Activated T-helper 2 cell treated with anti-CD3 and anti-CD28 coated beads, Interferon-gamma antibody, Interleukin-2, Interleukin-4, amounts not matched to agents 10 μg/mL and 5 μg/mL and 100 μg/mL, durations not matched to agents 14 hours and 24 hours and 36 hours (primary cell): ENCODE measurements at regions of chr2 and their contacts with region 1.

Region 1: DNA sequence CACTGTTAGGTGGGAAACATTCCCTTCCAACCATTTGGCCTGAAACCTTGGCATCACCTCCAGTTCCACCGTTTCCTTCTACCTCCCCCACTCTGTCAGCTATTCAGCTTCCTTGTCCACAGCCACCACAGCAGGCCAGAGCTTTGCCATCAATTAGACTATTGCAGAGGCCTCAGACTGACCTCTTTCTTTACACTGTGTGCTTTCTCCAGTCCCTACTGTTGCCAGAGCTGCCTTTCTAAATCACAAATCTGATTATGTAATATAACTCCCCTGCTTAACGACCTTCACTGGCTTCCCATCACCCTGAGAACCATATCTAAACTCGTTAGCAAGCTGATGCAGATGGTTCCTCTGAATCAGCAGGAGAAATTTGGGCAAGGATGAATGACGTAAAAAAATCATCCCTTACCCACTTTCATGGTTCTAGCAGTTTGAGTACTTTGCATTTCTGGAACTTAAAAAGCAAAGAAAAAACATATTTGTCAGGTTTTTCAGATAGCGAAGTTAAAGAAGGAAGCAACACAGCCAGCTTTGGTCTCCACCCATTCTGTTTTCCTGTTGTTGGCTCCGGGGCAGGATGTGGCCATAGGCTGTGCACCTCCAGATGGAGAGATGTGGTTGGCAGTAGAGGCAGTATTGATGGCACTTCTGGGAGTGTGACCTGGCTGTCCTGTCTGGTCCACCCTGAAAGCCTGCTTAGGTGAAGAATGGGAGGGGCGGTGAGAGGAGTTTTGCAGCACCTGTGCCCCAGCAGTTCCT is 422.1 kb downstream of the PARD3B start:
- DNase-seq: peak; percentile 72
- H3K4me3 Mint-ChIP-seq: peak overlapping the region; percentile 6
- H3K27ac Mint-ChIP-seq: peak overlapping the region; percentile 81
- H3K4me1 Mint-ChIP-seq: peaks cover 52% of the 10 kb centered on the region
- H3K27me3 Mint-ChIP-seq: no peaks in the 10 kb centered on the region

Region 2: GRCh38 chr2:204892506-204893255 is 74.7 kb before region 1 on chr2:
- intact Hi-C with region 1: loop called (anchors 2 kb)
- DNase-seq: peak; percentile 17
- H3K4me3 Mint-ChIP-seq: no peak overlapping the region
- H3K27ac Mint-ChIP-seq: no peak overlapping the region
- H3K4me1 Mint-ChIP-seq: peaks cover 14% of the 10 kb centered on the region
- H3K27me3 Mint-ChIP-seq: no peaks in the 10 kb centered on the region

Region 3: GRCh38 chr2:204913854-204914464 is 53.4 kb before region 1 on chr2:
- intact Hi-C with region 1: no loop called
- DNase-seq: no peak
- H3K4me3 Mint-ChIP-seq: no peak overlapping the region
- H3K27ac Mint-ChIP-seq: no peak overlapping the region
- H3K4me1 Mint-ChIP-seq: peaks cover 11% of the 10 kb centered on the region
- H3K27me3 Mint-ChIP-seq: no peaks in the 10 kb centered on the region

Region 4: GRCh38 chr2:205002390-205002789 is 35.0 kb after region 1 on chr2:
- intact Hi-C with region 1: loop called (anchors 5 kb)
- DNase-seq: peak; percentile 39
- H3K4me3 Mint-ChIP-seq: no peak overlapping the region
- H3K27ac Mint-ChIP-seq: peak overlapping the region; percentile 14
- H3K4me1 Mint-ChIP-seq: peaks cover 37% of the 10 kb centered on the region
- H3K27me3 Mint-ChIP-seq: no peaks in the 10 kb centered on the region

Region 5: GRCh38 chr2:205175831-205176230 is 208.5 kb after region 1 on chr2:
- intact Hi-C with region 1: no loop called
- DNase-seq: no peak
- H3K4me3 Mint-ChIP-seq: no peak overlapping the region
- H3K27ac Mint-ChIP-seq: no peak overlapping the region
- H3K4me1 Mint-ChIP-seq: no peaks in the 10 kb centered on the region
- H3K27me3 Mint-ChIP-seq: peaks cover 3% of the 10 kb centered on the region